Left colon (tissue), 2 donors: ENCODE measurements at regions of chr2 and their contacts with region 1.

Region 1: GRCh38 chr2:63692002-63692606 is 103.3 kb downstream of the MDH1 start:
- DNase-seq: no peak
- ATAC-seq: peak; percentile 85

Region 2: GRCh38 chr2:63594660-63595059 is 97.4 kb before region 1 on chr2:
- intact Hi-C with region 1: no loop called
- DNase-seq: no peak
- ATAC-seq: no peak

Region 3: DNA sequence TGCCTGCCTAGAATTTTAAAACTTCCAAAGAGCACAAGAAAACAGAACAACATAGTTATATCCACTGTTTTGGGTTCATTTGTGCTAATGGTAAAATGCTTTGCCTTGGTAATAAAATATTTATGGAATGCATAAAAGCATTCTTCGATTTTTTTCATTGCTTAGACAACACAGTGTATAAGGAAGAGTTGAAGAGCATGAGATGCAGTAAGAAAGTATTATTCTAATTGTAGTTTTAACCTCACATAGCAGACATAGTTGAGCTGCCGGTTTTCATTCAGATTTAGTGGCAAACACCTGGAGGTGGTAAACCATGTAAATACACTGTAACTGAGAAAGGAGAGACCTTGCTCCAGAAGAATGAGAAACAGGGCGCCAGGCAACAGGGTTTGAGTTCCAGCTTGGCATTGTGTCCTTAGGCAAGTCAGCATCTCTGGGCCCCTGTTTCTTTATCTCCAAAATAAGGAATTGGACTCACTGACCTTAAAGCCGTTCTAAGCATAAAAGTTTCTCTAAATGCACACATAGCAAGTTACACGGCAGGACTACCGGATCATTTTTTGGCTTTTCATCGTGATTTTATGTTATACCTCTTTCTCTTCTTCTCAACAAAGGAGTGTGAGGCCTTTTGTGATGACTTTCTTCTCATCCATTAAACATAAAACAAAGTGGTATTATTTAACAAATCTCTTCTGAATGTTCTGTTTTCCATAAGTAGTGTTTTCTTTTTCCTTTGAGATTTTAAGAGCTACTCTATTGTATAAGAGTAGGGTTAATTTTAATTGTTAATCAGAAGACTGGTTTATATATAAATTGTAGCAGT is 157.5 kb after region 1 on chr2:
- intact Hi-C with region 1: no loop called
- DNase-seq: no peak
- ATAC-seq: no peak

Region 4: GRCh38 chr2:63861220-63861822 is 169.2 kb after region 1 on chr2:
- intact Hi-C with region 1: loop called in 1 of 2 experiments (anchors 5 kb)
- DNase-seq: peak; percentile 37 to 56
- ATAC-seq: peak; percentile 65